Natural killer cell (primary cell): ENCODE measurements at regions of chr12 and their contacts with region 1.

Region 1: GRCh38 chr12:14845350-14845750 is 2.0 kb upstream of the ART4 start:
- DNase-seq: peak in 1 of 2 donors; percentile 77
- ATAC-seq: peak; percentile 62 to 81 (median 64)
- H3K4me3 ChIP-seq: no peak overlapping the region
- H3K4me3 Mint-ChIP-seq: no peak overlapping the region
- H3K27ac ChIP-seq: no peak overlapping the region
- H3K27ac Mint-ChIP-seq: peak overlapping the region in 1 of 2 donors; percentile 11
- H3K4me1 ChIP-seq: no peaks in the 10 kb centered on the region
- H3K4me1 Mint-ChIP-seq: peaks cover 0 to 5% of the 10 kb centered on the region in 2 donors
- H3K27me3 ChIP-seq: no peaks in the 10 kb centered on the region
- H3K27me3 Mint-ChIP-seq: peaks cover 0 to 16% of the 10 kb centered on the region in 2 donors
- CTCF ChIP-seq: peak; percentile 66

Region 2: GRCh38 chr12:14810953-14811483 is 34.3 kb before region 1 on chr12:
- intact Hi-C with region 1: no loop called
- DNase-seq: peak in 1 of 2 donors; percentile 18
- ATAC-seq: no peak
- H3K4me3 ChIP-seq: no peak overlapping the region
- H3K4me3 Mint-ChIP-seq: no peak overlapping the region
- H3K27ac ChIP-seq: no peak overlapping the region
- H3K27ac Mint-ChIP-seq: no peak overlapping the region
- H3K4me1 ChIP-seq: no peaks in the 10 kb centered on the region
- H3K4me1 Mint-ChIP-seq: no peaks in the 10 kb centered on the region
- H3K27me3 ChIP-seq: no peaks in the 10 kb centered on the region
- H3K27me3 Mint-ChIP-seq: peaks cover 7 to 13% of the 10 kb centered on the region in 2 donors
- CTCF ChIP-seq: no peak

Region 3: DNA sequence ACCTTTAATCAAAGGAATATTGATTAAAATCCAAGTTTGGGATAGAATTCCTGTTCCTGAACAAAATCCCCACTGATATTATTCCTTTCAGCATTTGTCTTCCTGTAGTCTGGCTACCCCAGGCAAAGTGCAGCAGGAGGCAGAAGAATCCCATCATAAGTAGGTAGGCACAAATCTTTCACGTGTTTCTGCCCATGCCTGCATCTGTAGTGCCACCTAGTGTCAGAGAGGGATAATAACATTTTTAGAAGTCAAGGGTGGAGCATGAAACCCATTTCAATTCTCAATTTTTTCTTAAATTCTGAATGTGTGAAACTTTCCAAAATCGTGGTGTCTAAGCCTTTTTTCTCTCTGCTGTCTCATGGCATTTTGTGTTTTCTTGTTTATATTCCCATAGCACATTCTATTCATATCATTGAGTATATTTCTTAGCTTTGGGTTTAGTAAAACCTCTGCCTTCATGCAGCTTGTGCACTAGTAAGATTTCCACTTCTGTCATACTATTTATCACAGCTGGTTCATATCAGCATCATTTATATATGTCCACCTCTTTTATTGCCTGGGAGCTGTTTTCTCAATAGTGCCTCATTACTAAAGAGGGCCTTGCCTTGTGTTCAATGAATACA is 423.7 kb after region 1 on chr12:
- intact Hi-C with region 1: loop called (anchors 5 kb)
- DNase-seq: peak in 1 of 2 donors; percentile 75
- ATAC-seq: peak; percentile 77 to 83 (median 79)
- H3K4me3 ChIP-seq: no peak overlapping the region
- H3K4me3 Mint-ChIP-seq: no peak overlapping the region
- H3K27ac ChIP-seq: no peak overlapping the region
- H3K27ac Mint-ChIP-seq: no peak overlapping the region
- H3K4me1 ChIP-seq: no peaks in the 10 kb centered on the region
- H3K4me1 Mint-ChIP-seq: no peaks in the 10 kb centered on the region
- H3K27me3 ChIP-seq: no peaks in the 10 kb centered on the region
- H3K27me3 Mint-ChIP-seq: peaks cover 2 to 11% of the 10 kb centered on the region in 2 donors
- CTCF ChIP-seq: peak; percentile 83